HepG2 (cell line): ENCODE measurements at regions of chr13 and their contacts with region 1.

Region 1: DNA sequence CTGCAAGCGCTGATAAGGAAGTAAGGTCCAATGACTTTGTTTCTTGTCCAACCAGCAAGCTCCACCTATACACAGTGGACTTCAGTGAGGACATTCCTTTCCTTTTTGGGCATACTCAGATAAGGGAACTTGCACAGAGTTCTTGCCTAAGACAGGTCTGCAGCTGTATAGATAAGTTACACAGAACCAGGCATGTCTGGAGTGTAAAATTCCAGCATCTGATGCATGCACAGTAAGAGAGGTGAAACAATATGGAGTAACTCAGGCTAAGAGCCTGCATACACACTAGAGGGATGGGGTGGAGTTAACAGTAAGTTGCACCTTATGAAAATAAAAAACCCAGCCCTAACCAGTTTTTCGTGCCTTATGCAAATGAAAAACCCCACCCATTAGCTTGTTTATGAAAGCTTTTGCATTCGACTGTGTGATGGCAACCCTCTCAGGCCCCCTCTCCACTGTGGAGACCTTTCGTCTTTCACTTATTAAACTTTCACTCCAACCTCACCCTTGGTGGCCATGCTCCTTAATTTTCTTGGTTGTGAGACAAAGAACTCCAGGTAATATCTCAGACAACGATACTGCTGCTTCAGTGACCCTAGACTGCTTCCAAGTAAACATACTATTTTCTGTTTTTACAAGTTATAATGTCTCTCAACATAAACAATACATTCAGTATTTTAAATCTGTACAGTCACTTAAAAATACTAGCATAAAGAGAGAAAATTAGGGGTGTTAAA is 2859.0 kb upstream of the PCDH20 start:
- DNase-seq: no peak
- ATAC-seq: no peak
- H3K4me3 ChIP-seq: no peak overlapping the region
- H3K27ac ChIP-seq: no peak overlapping the region
- H3K4me1 ChIP-seq: no peaks in the 10 kb centered on the region
- H3K27me3 ChIP-seq: no peaks in the 10 kb centered on the region
- CTCF ChIP-seq: no peak
- EP300 ChIP-seq: no peak
- POLR2A ChIP-seq: no peak
- RAD21 ChIP-seq: no peak

Region 2: GRCh38 chr13:64293922-64294321 is 19.3 kb after region 1 on chr13:
- CTCF ChIA-PET with region 1: no interaction called
- POLR2A ChIA-PET with region 1: no interaction called
- in situ Hi-C with region 1: no loop called
- intact Hi-C with region 1: loop called (anchors 1 kb)
- DNase-seq: no peak
- ATAC-seq: no peak
- H3K4me3 ChIP-seq: no peak overlapping the region
- H3K27ac ChIP-seq: no peak overlapping the region
- H3K4me1 ChIP-seq: no peaks in the 10 kb centered on the region
- H3K27me3 ChIP-seq: no peaks in the 10 kb centered on the region
- CTCF ChIP-seq: no peak
- EP300 ChIP-seq: no peak
- POLR2A ChIP-seq: no peak
- RAD21 ChIP-seq: no peak